ENCODE measurements at regions of chr19 and their contacts with region 1.

Region 1: GRCh38 chr19:10565567-10566407 is at the start of gene KRI1:
- DNase-seq: peak; percentile 99
- ATAC-seq: peak; percentile 46
- H3K4me3 Mint-ChIP-seq: peak within 1 kb of the TSS; percentile 89
- H3K27ac Mint-ChIP-seq: peak within 1 kb of the TSS; percentile 87
- H3K4me1 Mint-ChIP-seq: peaks cover 32% of the 10 kb centered on the region
- H3K27me3 Mint-ChIP-seq: peaks cover 19% of the 10 kb centered on the region
- CTCF ChIP-seq: no peak
- total RNA-seq, gene KRI1: 43.6 to 50.9 TPM (median 49.3 TPM) in 3 replicates

Region 2: DNA sequence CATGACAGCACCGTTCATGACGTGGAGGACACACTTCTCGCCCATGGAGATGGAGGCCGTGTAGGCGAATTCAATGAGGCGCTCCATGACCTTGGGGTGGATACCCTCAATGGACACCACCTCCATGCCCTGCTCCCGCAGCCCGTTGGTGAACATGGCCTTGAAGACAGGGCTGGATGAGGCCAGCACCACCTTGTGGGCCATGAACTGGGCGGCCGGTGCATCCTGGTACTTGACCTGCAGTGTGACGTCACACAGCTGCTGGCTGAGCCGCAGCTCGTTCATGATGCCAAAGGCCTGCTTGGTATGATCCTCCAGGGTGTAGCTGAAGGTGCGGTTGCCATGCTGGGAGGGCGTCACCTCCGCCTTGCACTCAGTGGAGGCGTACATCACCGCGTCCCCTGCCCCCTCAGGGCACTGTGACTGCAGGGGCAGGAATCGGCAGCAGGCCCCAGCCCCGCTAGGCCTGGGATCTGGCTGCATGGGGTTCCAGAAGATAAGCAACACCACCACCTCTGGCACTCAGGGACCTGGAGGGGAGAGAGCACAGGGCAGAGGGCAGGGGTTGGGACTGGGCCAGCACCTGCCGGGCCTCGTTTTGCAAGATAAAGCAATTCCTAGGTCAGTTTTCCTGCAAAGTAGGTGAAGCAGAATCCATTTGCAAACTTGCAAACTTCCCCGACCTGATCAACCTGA is 66.1 kb before region 1 on chr19:
- CTCF ChIA-PET with region 1: no interaction called
- POLR2A ChIA-PET with region 1: no interaction called
- DNase-seq: peak; percentile 46
- ATAC-seq: peak; percentile 59
- H3K4me3 Mint-ChIP-seq: peak overlapping the region; percentile 59
- H3K27ac Mint-ChIP-seq: peak overlapping the region; percentile 98
- H3K4me1 Mint-ChIP-seq: peaks cover 22% of the 10 kb centered on the region
- H3K27me3 Mint-ChIP-seq: 0 out of 2 replicates have a peak, but pooled peaks cover 4% of the 10 kb centered on the region
- CTCF ChIP-seq: no peak

Region 3: DNA sequence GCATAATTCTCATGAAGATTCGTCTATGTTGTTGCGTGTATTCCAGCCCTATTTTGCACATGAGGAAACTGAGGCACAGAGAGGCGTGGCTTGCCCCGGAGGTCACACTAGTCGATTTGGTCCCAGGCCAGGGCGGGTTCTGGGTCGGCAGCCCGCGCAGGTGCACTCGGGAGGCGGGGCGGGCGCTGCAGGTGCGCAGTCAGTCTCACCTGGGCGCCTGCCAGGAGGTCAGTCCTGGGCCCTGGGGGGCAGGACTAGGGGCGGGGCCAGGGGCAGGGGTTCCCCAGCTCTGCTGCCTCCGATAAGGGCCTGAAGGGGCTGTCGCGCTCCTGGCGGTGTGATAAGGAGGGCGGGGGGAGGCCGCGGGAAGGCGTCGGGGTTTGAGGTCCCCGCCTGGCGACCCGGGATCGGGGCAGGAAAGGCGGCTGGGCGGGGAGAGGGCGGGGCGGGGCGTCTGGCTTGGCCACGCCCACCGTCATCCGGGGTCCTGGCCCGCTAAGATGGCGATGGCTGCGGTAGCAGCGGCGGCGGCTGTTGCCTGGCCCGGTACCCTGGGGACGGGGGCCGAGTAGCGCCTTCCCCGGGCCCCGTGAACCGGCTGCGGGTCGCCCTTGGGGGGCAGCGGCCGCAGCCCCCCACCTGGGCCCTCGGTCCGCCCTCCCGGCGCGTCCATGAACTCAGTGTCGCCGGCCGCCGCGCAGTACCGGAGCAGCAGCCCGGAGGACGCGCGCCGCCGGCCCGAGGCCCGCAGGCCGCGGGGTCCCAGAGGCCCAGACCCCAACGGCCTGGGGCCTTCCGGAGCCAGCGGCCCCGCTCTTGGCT is 22.2 kb before region 1 on chr19 and contains the start of gene ATG4D:
- CTCF ChIA-PET with region 1: interaction called, 20 read pairs
- POLR2A ChIA-PET with region 1: interaction called, 3 read pairs
- DNase-seq: peak; percentile 92
- ATAC-seq: peak; percentile 87
- H3K4me3 Mint-ChIP-seq: peak within 1 kb of the TSS; percentile 83
- H3K27ac Mint-ChIP-seq: peak within 1 kb of the TSS; percentile 93
- H3K4me1 Mint-ChIP-seq: peaks cover 4% of the 10 kb centered on the region; the same call in 1 of the 2 replicates
- H3K27me3 Mint-ChIP-seq: peaks cover 6% of the 10 kb centered on the region
- CTCF ChIP-seq: no peak
- total RNA-seq, gene ATG4D: 50.3 to 59.4 TPM (median 53.8 TPM) in 3 replicates

Measured in WTC11 (cell line).